ENCODE measurements at regions of chr22 and their contacts with region 1.

Region 1: GRCh38 chr22:22748297-22748743 is 103.9 kb downstream of the GGTLC2 start:
- DNase-seq: peak; percentile 73 to 86 (median 82)
- ATAC-seq: peak; percentile 87
- H3K4me3 ChIP-seq: no peak overlapping the region
- H3K27ac ChIP-seq: no peak overlapping the region
- H3K4me1 ChIP-seq: no peaks in the 10 kb centered on the region
- H3K27me3 ChIP-seq: peaks cover 4 to 30% of the 10 kb centered on the region in 2 experiments; a peak in 3 of 5 replicates
- CTCF ChIP-seq: no peak
- EP300 ChIP-seq: no peak
- POLR2A ChIP-seq: no peak
- RAD21 ChIP-seq: peak in 1 of 2 experiments; percentile 76; a peak in 2 of 4 replicates

Region 2: GRCh38 chr22:22431271-22432220 is 316.8 kb before region 1 on chr22:
- CTCF ChIA-PET with region 1: interaction called, 11 read pairs
- POLR2A ChIA-PET with region 1: interaction called, 3 read pairs
- in situ Hi-C with region 1: no loop called
- intact Hi-C with region 1: no loop called
- DNase-seq: peak; percentile 95 to 99 (median 98)
- ATAC-seq: peak; percentile 98
- H3K4me3 ChIP-seq: no peak overlapping the region
- H3K27ac ChIP-seq: no peak overlapping the region
- H3K4me1 ChIP-seq: no peaks in the 10 kb centered on the region
- H3K27me3 ChIP-seq: peaks cover 18 to 32% of the 10 kb centered on the region in 2 experiments; a peak in 4 of 5 replicates
- CTCF ChIP-seq: peak; percentile 97 to 100 (median 99)
- EP300 ChIP-seq: no peak
- POLR2A ChIP-seq: no peak
- RAD21 ChIP-seq: peak; percentile 92 to 99

Region 3: GRCh38 chr22:22692707-22693530 is 55.4 kb before region 1 on chr22:
- CTCF ChIA-PET with region 1: interaction called, 9 read pairs
- POLR2A ChIA-PET with region 1: interaction called, 3 read pairs
- in situ Hi-C with region 1: no loop called
- intact Hi-C with region 1: loop called (anchors 1 kb)
- DNase-seq: peak; percentile 96 to 100 (median 99)
- ATAC-seq: peak; percentile 94
- H3K4me3 ChIP-seq: no peak overlapping the region
- H3K27ac ChIP-seq: no peak overlapping the region
- H3K4me1 ChIP-seq: no peaks in the 10 kb centered on the region
- H3K27me3 ChIP-seq: peaks cover 0 to 27% of the 10 kb centered on the region in 2 experiments; a peak in 2 of 5 replicates
- CTCF ChIP-seq: no peak
- EP300 ChIP-seq: no peak
- POLR2A ChIP-seq: no peak
- RAD21 ChIP-seq: no peak

Region 4: GRCh38 chr22:22702237-22703202 is 45.8 kb before region 1 on chr22:
- CTCF ChIA-PET with region 1: interaction called, 60 read pairs
- POLR2A ChIA-PET with region 1: interaction called, 10 read pairs
- in situ Hi-C with region 1: no loop called
- intact Hi-C with region 1: no loop called
- DNase-seq: peak in 1 of 4 experiments; percentile 83
- ATAC-seq: peak; percentile 86
- H3K4me3 ChIP-seq: no peak overlapping the region
- H3K27ac ChIP-seq: no peak overlapping the region
- H3K4me1 ChIP-seq: no peaks in the 10 kb centered on the region
- H3K27me3 ChIP-seq: peaks cover 0 to 36% of the 10 kb centered on the region in 2 experiments; a peak in 2 of 5 replicates
- CTCF ChIP-seq: peak in 1 of 3 experiments; percentile 93; a peak in 2 of 6 replicates
- EP300 ChIP-seq: no peak
- POLR2A ChIP-seq: no peak
- RAD21 ChIP-seq: peak in 1 of 2 experiments; percentile 91; a peak in 2 of 4 replicates

Region 5: GRCh38 chr22:22710719-22711531 is 37.4 kb before region 1 on chr22:
- CTCF ChIA-PET with region 1: interaction called, 60 read pairs
- POLR2A ChIA-PET with region 1: interaction called, 10 read pairs
- in situ Hi-C with region 1: no loop called
- intact Hi-C with region 1: loop called (anchors 1 kb)
- DNase-seq: peak; percentile 93 to 100 (median 99)
- ATAC-seq: peak; percentile 88
- H3K4me3 ChIP-seq: no peak overlapping the region
- H3K27ac ChIP-seq: no peak overlapping the region
- H3K4me1 ChIP-seq: no peaks in the 10 kb centered on the region
- H3K27me3 ChIP-seq: peaks cover 3 to 20% of the 10 kb centered on the region in 2 experiments; a peak in 2 of 5 replicates
- CTCF ChIP-seq: no peak
- EP300 ChIP-seq: no peak
- POLR2A ChIP-seq: no peak
- RAD21 ChIP-seq: no peak

Region 6: GRCh38 chr22:22720201-22720723 is 28.1 kb before region 1 on chr22:
- CTCF ChIA-PET with region 1: interaction called, 21 read pairs
- POLR2A ChIA-PET with region 1: interaction called, 11 read pairs
- in situ Hi-C with region 1: no loop called
- intact Hi-C with region 1: loop called (anchors 1 kb)
- DNase-seq: peak; percentile 93 to 96 (median 94)
- ATAC-seq: peak; percentile 97
- H3K4me3 ChIP-seq: no peak overlapping the region
- H3K27ac ChIP-seq: no peak overlapping the region
- H3K4me1 ChIP-seq: peaks cover 0 to 25% of the 10 kb centered on the region in 2 experiments; a peak in 3 of 5 replicates
- H3K27me3 ChIP-seq: peaks cover 0 to 12% of the 10 kb centered on the region in 2 experiments; a peak in 2 of 5 replicates
- CTCF ChIP-seq: no peak
- EP300 ChIP-seq: no peak
- POLR2A ChIP-seq: no peak
- RAD21 ChIP-seq: no peak

Region 7: GRCh38 chr22:22737590-22737989 is 10.7 kb before region 1 on chr22:
- CTCF ChIA-PET with region 1: interaction called, 9 read pairs
- POLR2A ChIA-PET with region 1: interaction called, 41 read pairs
- in situ Hi-C with region 1: no loop called
- intact Hi-C with region 1: no loop called
- DNase-seq: no peak
- ATAC-seq: no peak
- H3K4me3 ChIP-seq: no peak overlapping the region
- H3K27ac ChIP-seq: no peak overlapping the region
- H3K4me1 ChIP-seq: peaks cover 0 to 15% of the 10 kb centered on the region in 2 experiments; a peak in 1 of 5 replicates
- H3K27me3 ChIP-seq: peaks cover 5 to 23% of the 10 kb centered on the region in 2 experiments; a peak in 4 of 5 replicates
- CTCF ChIP-seq: no peak
- EP300 ChIP-seq: no peak
- POLR2A ChIP-seq: no peak
- RAD21 ChIP-seq: no peak

Region 8: GRCh38 chr22:22838148-22838786 is 89.9 kb after region 1 on chr22:
- CTCF ChIA-PET with region 1: no interaction called
- POLR2A ChIA-PET with region 1: no interaction called
- in situ Hi-C with region 1: no loop called
- intact Hi-C with region 1: no loop called
- DNase-seq: peak in 1 of 4 experiments; percentile 38
- ATAC-seq: peak; percentile 30
- H3K4me3 ChIP-seq: no peak overlapping the region
- H3K27ac ChIP-seq: no peak overlapping the region
- H3K4me1 ChIP-seq: peaks cover 0 to 7% of the 10 kb centered on the region in 2 experiments; a peak in 1 of 5 replicates
- H3K27me3 ChIP-seq: peaks cover 22 to 33% of the 10 kb centered on the region in 2 experiments
- CTCF ChIP-seq: no peak
- EP300 ChIP-seq: no peak
- POLR2A ChIP-seq: no peak
- RAD21 ChIP-seq: no peak